ENCODE measurements at regions of chr16 and their contacts with region 1.

Region 1: GRCh38 chr16:68264128-68265077 is at the start of gene SLC7A6:
- DNase-seq: peak; percentile 95
- H3K4me3 ChIP-seq: peak within 1 kb of the TSS; percentile 77 to 95 (median 84)
- H3K27ac ChIP-seq: peak within 1 kb of the TSS; percentile 85 to 97 (median 94)
- H3K4me1 ChIP-seq: peaks cover 7 to 75% (median 50%) of the 10 kb centered on the region in 6 donors
- H3K27me3 ChIP-seq: no peaks in the 10 kb centered on the region
- CTCF ChIP-seq: peak; percentile 54 to 91 (median 80)
- POLR2A ChIP-seq: peak in 1 of 3 donors; percentile 37
- total RNA-seq, gene SLC7A6: 24.9 to 62.8 (median 50.7) TPM

Region 2: DNA sequence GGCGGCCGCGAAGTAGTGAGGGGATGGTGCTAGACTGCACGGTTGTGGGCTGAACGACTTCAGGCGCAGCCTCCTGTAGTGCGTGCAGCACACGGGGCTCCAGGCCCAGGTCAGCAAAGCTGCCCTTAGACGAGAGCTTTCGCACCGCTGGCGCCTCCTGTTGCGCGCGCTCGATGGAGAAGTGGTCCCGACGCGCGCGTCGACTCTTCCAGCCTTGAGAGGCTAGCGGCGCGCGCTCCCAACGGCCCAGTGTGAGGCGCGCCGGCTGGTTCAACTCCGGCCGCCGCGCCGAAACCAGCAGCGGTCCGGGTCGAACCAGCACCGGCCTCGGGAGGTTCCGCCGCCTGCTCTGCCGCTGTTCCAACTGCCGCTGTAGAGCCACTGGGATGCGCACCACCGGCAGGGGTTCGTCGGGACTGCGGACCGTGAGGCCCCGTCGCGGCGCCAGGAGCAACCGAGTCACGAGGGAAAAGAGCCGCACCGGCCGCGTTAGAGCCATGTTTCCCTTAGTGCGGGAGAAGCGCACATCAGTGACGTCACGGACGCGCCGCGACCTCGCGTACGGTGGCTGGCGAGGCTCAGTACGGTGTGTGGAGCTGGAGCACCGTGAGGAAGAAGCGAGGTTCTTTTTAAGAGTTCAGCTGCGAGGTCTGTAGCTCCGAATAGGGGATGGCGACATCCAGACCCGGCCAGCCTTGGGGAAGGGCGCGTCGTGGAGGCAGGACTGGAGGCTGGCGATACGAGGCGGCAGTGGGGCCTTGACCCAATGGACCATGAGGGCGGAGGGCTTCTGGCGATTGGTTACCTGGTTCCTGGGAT is 241.5 kb before region 1 on chr16 and contains the starts of genes DDX28 and DUS2:
- intact Hi-C with region 1: no loop called
- DNase-seq: peak; percentile 98
- H3K4me3 ChIP-seq: peak within 1 kb of the TSS; percentile 91 to 100 (median 100)
- H3K27ac ChIP-seq: peak within 1 kb of the TSS; percentile 79 to 94 (median 89)
- H3K4me1 ChIP-seq: peaks cover 25 to 49% (median 31%) of the 10 kb centered on the region in 6 donors
- H3K27me3 ChIP-seq: no peaks in the 10 kb centered on the region
- CTCF ChIP-seq: peak in 3 of 11 experiments; percentile 15 to 35 (median 18)
- POLR2A ChIP-seq: peak in 1 of 3 donors; percentile 46
- total RNA-seq, gene DDX28: 8.6 to 12.7 (median 10.3) TPM
- total RNA-seq, gene DUS2: 22.3 to 31.7 (median 27.6) TPM

Region 3: DNA sequence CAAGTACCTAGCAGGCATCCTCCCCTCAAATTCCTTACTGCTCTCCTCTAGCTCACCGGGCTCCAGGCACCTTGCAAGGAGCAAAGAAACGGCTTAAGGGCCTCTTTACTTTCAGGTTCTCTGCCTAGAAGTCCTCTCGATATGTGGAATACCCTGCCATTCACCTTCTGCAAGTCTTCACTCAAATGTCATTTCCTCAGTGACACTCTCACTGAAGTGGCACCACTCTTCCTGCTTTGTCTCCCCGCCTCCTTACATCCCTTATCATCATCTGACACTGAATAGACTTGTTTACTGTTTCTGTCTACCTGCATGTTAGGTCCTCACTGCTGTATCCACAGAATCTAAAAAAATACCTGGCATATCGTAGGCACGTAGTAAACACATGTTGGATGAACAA is 45.4 kb after region 1 on chr16:
- intact Hi-C with region 1: loop called (anchors 5 kb)
- DNase-seq: no peak
- H3K4me3 ChIP-seq: peak overlapping the region; percentile 83 to 98 (median 88)
- H3K27ac ChIP-seq: peak overlapping the region in 6 of 8 donors; percentile 87 to 94 (median 91)
- H3K4me1 ChIP-seq: peaks cover 24 to 91% (median 49%) of the 10 kb centered on the region in 6 donors
- H3K27me3 ChIP-seq: no peaks in the 10 kb centered on the region
- CTCF ChIP-seq: no peak
- POLR2A ChIP-seq: no peak

Region 4: DNA sequence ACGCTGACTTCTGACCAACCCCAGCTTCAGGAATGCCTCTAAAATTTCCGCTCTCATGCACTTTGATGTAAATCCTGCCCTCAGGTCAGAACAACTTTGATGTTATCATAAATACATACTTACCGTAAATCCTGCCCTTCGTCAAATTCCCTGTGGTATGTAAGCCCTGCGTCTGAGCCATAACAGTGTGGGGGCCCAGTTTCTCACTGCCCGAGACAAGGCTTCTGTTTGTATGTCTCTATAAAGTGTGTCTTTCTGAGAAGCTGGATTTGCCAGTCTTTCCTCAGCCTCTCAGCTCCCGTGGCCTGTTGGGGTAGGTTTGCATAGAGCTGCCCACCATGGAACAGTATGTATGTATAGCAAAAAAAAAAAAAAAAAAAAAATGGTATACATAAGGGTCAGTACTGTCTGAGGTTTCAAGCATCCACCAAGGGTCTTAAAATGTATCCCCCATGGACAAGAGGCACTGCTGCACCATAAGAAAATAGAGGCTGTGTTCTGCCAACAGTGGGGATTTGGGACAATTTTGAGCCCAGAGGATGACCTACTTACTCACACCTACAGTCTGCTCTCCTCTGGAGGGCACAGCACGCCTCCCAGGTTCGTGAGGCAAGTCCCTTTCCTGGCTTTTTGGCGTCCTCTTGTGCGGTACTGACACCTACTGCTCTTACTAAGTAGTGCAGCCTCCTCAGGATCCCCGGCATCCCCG is 63.9 kb after region 1 on chr16:
- intact Hi-C with region 1: loop called (anchors 5 kb)
- DNase-seq: peak; percentile 90
- H3K4me3 ChIP-seq: no peak overlapping the region
- H3K27ac ChIP-seq: no peak overlapping the region
- H3K4me1 ChIP-seq: peaks cover 9 to 34% (median 21%) of the 10 kb centered on the region in 6 donors
- H3K27me3 ChIP-seq: no peaks in the 10 kb centered on the region
- CTCF ChIP-seq: peak; percentile 91 to 98 (median 97)
- POLR2A ChIP-seq: no peak